ENCODE measurements at regions of chr11 and their contacts with region 1.

Region 1: DNA sequence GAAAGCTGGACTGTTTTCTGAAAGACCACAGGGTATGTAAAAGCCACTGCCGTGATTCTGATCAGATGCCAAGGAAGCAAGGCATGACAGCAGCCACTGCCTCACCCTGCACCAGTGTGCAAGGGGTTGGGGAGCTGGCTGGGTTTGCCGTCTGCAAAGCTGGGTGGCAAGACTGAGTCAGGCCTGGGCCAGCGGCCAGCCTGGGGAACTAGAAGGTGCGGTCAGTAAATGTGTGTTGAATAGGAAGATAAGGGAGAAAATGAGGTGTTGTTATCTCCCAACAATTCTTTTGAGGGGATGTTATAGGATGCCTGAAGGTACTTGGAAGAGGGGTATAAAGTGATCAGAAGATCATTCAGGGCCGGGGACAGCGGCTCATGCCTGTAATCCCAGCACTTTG is 8.0 kb downstream of the VSTM5 start:
- DNase-seq: peak; percentile 90 to 91
- H3K4me3 ChIP-seq: no peak overlapping the region
- H3K27ac ChIP-seq: no peak overlapping the region
- H3K4me1 ChIP-seq: peaks cover 10% of the 10 kb centered on the region
- H3K27me3 ChIP-seq: no peaks in the 10 kb centered on the region
- CTCF ChIP-seq: no peak

Region 2: GRCh38 chr11:93801366-93801765 is 41.1 kb before region 1 on chr11:
- CTCF ChIA-PET with region 1: interaction called, 12 read pairs
- POLR2A ChIA-PET with region 1: no interaction called
- intact Hi-C with region 1: no loop called
- DNase-seq: no peak
- H3K4me3 ChIP-seq: no peak overlapping the region
- H3K27ac ChIP-seq: no peak overlapping the region
- H3K4me1 ChIP-seq: no peaks in the 10 kb centered on the region
- H3K27me3 ChIP-seq: no peaks in the 10 kb centered on the region
- CTCF ChIP-seq: no peak

Region 3: GRCh38 chr11:93817426-93818348 is 24.8 kb before region 1 on chr11:
- CTCF ChIA-PET with region 1: no interaction called
- POLR2A ChIA-PET with region 1: interaction called, 4 read pairs
- intact Hi-C with region 1: loop called (anchors 1 kb)
- DNase-seq: peak; percentile 55 to 96
- H3K4me3 ChIP-seq: peak overlapping the region; percentile 5; the same call in 1 of the 2 replicates
- H3K27ac ChIP-seq: peak overlapping the region; percentile 48
- H3K4me1 ChIP-seq: peaks cover 25% of the 10 kb centered on the region
- H3K27me3 ChIP-seq: no peaks in the 10 kb centered on the region
- CTCF ChIP-seq: no peak

Region 4: GRCh38 chr11:93905384-93905783 is 62.9 kb after region 1 on chr11:
- CTCF ChIA-PET with region 1: no interaction called
- POLR2A ChIA-PET with region 1: no interaction called
- intact Hi-C with region 1: no loop called
- DNase-seq: peak in 1 of 2 experiments; percentile 47
- H3K4me3 ChIP-seq: no peak overlapping the region
- H3K27ac ChIP-seq: no peak overlapping the region
- H3K4me1 ChIP-seq: peaks cover 9% of the 10 kb centered on the region
- H3K27me3 ChIP-seq: no peaks in the 10 kb centered on the region
- CTCF ChIP-seq: no peak

Region 5: DNA sequence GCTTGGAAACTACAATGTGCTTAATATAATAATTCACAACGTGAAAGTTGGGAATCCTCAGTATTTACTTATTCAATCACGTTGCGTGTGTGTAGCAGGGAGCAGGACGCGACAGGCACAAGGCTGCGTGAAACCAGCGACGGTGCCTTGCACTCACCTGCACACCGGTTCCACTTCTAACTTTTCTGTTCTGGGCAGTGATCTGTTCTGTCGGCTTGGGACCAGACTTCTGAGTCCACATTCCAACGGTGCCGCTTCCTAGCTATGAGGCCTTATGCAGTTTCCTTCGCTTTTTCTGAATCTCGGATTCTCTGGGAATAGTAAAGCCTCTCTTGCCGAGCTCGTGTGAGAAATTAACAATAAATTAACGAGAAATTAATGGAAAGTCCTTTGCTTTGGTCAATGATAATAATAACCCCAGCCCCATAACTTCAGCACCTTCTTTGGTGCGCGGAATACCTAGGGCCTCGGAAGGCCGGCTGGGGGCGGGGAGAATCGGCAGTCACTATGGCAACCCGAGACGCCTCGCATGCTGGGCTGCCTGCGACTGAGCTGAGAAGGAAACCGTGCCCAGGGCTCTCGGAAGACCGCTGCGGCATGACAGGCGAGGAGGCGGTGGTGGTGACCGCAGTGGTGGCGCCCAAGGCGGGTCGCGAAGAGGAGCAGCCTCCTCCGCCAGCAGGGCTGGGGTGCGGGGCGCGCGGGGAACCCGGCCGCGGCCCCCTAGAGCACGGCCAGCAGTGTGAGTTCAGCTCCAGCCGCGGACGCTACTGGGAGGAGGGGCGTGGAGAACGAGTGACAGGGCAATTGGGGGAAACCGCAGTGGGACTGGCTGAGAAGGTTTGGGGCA is 669.7 kb after region 1 on chr11 and contains the start of gene C11orf97:
- CTCF ChIA-PET with region 1: no interaction called
- POLR2A ChIA-PET with region 1: no interaction called
- intact Hi-C with region 1: no loop called
- DNase-seq: peak; percentile 48 to 59
- H3K4me3 ChIP-seq: peak within 1 kb of the TSS; percentile 61
- H3K27ac ChIP-seq: no peak within 1 kb of the TSS
- H3K4me1 ChIP-seq: peaks cover 16% of the 10 kb centered on the region
- H3K27me3 ChIP-seq: no peaks in the 10 kb centered on the region
- CTCF ChIP-seq: no peak
- total RNA-seq, gene C11orf97: not detected in 2 replicates